Activated T-helper 2 cell treated with anti-CD3 and anti-CD28 coated beads, Interferon-gamma antibody, Interleukin-2, Interleukin-4, amounts not matched to agents 10 μg/mL and 5 μg/mL and 100 μg/mL, durations not matched to agents 14 hours and 24 hours and 36 hours (primary cell): ENCODE measurements at regions of chr14 and their contacts with region 1.

Region 1: DNA sequence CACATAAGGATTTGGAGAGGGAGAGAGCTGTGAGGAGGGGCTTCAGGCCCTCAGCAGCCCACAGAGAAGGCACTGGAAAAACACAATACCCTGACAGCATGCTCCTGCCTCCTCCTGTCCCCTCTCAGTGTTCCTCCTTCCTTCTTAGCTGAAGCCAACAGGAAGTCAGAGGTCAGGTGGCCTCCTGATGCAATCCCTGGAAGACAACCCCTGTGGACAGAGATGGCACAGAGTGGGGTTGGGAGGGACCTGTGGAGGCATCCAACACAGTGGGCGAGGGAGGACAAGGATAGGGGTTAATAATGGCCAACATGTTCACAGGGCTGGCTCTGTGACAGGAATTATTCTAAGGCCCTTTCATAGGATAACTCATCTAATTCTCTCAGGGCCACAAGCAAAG is 15.4 kb upstream of the IFI27L2 start:
- DNase-seq: no peak
- H3K4me3 Mint-ChIP-seq: no peak overlapping the region
- H3K27ac Mint-ChIP-seq: no peak overlapping the region
- H3K4me1 Mint-ChIP-seq: peaks cover 15% of the 10 kb centered on the region
- H3K27me3 Mint-ChIP-seq: peaks cover 19% of the 10 kb centered on the region

Region 2: GRCh38 chr14:94173885-94174603 is 29.3 kb after region 1 on chr14 and contains the start of gene PPP4R4:
- intact Hi-C with region 1: loop called (anchors 1 kb)
- DNase-seq: peak; percentile 89
- H3K4me3 Mint-ChIP-seq: peak within 1 kb of the TSS; percentile 78
- H3K27ac Mint-ChIP-seq: no peak within 1 kb of the TSS
- H3K4me1 Mint-ChIP-seq: peaks cover 21% of the 10 kb centered on the region
- H3K27me3 Mint-ChIP-seq: peaks cover 57% of the 10 kb centered on the region
- total RNA-seq, gene PPP4R4: 1.2 and 1.8 TPM in 2 replicates